PC-3 (cell line): ENCODE measurements at regions of chr1 and their contacts with region 1.

Region 1: GRCh38 chr1:162381383-162381782 is at the start of gene C1orf226:
- DNase-seq: peak; percentile 98
- ATAC-seq: peak; percentile 87
- H3K4me3 ChIP-seq: peak within 1 kb of the TSS; percentile 49
- H3K27ac ChIP-seq: peak within 1 kb of the TSS; percentile 95
- H3K4me1 ChIP-seq: peaks cover 27% of the 10 kb centered on the region
- H3K27me3 ChIP-seq: no peaks in the 10 kb centered on the region
- CTCF ChIP-seq: no peak
- total RNA-seq, gene C1orf226: 2.6 and 4.3 TPM in 2 replicates

Region 2: DNA sequence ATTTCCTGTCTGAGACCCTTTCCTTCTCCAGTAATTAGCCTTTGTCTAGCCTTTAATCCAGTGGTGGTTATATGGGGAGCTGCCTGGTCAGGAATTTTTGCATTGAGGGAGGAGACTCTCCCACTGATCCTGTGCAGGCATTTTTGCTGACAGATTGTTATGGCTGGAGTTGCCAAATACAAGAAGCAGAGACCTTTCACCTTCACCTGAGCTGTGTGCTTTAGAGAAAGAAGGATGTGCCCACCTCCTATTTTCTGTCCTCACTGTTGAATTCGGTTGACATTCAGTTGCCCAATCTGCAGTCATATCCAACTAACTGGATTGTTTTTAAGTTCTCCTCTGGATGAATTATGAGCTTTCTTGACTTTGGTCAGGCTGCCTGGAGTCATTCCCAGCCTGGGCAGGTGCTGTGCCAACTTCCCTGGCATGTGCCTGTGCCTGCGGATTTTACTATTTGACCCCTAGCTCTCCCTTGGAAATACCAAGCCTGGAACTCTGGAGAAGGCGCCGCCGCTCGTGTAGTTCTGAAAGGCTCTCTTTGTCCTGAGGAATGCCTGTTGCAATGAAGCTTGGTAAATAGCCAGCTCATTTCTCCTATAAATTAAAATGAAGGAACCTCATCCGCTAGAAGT is 168.0 kb before region 1 on chr1:
- CTCF ChIA-PET with region 1: no interaction called
- POLR2A ChIA-PET with region 1: no interaction called
- intact Hi-C with region 1: no loop called
- DNase-seq: peak; percentile 94
- ATAC-seq: peak; percentile 87
- H3K4me3 ChIP-seq: no peak overlapping the region
- H3K27ac ChIP-seq: no peak overlapping the region
- H3K4me1 ChIP-seq: peaks cover 19% of the 10 kb centered on the region
- H3K27me3 ChIP-seq: no peaks in the 10 kb centered on the region
- CTCF ChIP-seq: no peak

Region 3: GRCh38 chr1:162276493-162276892 is 104.9 kb before region 1 on chr1:
- CTCF ChIA-PET with region 1: interaction called, 11 read pairs
- POLR2A ChIA-PET with region 1: no interaction called
- intact Hi-C with region 1: no loop called
- DNase-seq: peak; percentile 84
- ATAC-seq: peak; percentile 68
- H3K4me3 ChIP-seq: no peak overlapping the region
- H3K27ac ChIP-seq: no peak overlapping the region
- H3K4me1 ChIP-seq: no peaks in the 10 kb centered on the region
- H3K27me3 ChIP-seq: no peaks in the 10 kb centered on the region
- CTCF ChIP-seq: peak; percentile 91